ENCODE measurements at regions of chr1 and their contacts with region 1.

Region 1: DNA sequence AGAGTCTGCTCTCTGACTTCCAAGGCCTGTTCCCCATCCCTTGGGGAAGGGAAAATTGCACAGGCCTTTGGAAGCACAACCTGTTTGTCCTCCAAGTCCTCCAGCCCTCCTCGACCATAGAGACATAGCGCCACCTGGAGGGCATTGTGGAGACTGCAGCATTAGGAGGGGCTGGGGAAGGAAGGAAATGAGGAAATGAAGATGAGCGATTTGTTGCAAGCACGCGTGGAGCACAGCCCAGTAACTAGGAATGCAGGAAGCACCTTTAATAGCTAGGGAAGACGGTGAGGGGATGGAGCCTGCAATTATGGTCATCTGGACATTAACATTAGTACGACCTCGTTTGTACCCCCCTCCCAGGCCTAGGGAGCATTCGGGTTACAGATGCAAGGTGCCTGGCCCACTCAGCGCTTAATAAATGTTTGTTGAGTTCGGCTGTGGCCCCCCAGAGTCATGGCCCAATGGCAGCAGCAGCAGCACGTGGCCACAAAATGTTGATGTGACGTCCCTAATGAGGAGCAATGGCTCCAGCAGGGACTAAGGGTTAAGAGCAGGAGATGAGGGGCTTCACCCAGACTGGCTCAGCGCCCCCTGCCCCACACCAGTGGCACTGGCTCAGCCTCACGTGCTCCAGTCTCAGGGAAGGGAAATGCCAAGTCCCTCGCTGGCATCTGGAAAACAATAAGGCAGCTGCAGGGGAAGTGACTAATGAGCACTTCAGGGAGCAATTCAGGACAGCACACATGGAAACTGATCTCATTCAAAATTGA is 8.0 kb upstream of the CAMK2N1 start:
- DNase-seq: peak; percentile 85 to 88
- ATAC-seq: peak; percentile 80 to 90 (median 82)
- H3K4me3 ChIP-seq: no peak overlapping the region
- H3K27ac ChIP-seq: no peak overlapping the region
- H3K4me1 ChIP-seq: no peaks in the 10 kb centered on the region
- H3K27me3 ChIP-seq: peaks cover 0 to under 1% (median 0%) of the 10 kb centered on the region in 3 donors
- CTCF ChIP-seq: peak; percentile 98

Region 2: GRCh38 chr1:19918057-19918456 is 576.0 kb before region 1 on chr1:
- intact Hi-C with region 1: loop called (anchors 5 to 10 kb)
- DNase-seq: peak; percentile 76 to 86
- ATAC-seq: peak; percentile 58 to 90 (median 72)
- H3K4me3 ChIP-seq: no peak overlapping the region
- H3K27ac ChIP-seq: no peak overlapping the region
- H3K4me1 ChIP-seq: no peaks in the 10 kb centered on the region
- H3K27me3 ChIP-seq: peaks cover 0 to 4% (median 0%) of the 10 kb centered on the region in 3 donors
- CTCF ChIP-seq: peak; percentile 88

Region 3: GRCh38 chr1:19974822-19975416 is 519.1 kb before region 1 on chr1:
- intact Hi-C with region 1: loop called in 1 of 2 experiments (anchors 10 kb)
- DNase-seq: peak; percentile 42 to 60
- ATAC-seq: peak; percentile 57 to 82 (median 80)
- H3K4me3 ChIP-seq: no peak overlapping the region
- H3K27ac ChIP-seq: no peak overlapping the region
- H3K4me1 ChIP-seq: no peaks in the 10 kb centered on the region
- H3K27me3 ChIP-seq: peaks cover 0 to 30% (median 0%) of the 10 kb centered on the region in 3 donors
- CTCF ChIP-seq: peak; percentile 67

Region 4: DNA sequence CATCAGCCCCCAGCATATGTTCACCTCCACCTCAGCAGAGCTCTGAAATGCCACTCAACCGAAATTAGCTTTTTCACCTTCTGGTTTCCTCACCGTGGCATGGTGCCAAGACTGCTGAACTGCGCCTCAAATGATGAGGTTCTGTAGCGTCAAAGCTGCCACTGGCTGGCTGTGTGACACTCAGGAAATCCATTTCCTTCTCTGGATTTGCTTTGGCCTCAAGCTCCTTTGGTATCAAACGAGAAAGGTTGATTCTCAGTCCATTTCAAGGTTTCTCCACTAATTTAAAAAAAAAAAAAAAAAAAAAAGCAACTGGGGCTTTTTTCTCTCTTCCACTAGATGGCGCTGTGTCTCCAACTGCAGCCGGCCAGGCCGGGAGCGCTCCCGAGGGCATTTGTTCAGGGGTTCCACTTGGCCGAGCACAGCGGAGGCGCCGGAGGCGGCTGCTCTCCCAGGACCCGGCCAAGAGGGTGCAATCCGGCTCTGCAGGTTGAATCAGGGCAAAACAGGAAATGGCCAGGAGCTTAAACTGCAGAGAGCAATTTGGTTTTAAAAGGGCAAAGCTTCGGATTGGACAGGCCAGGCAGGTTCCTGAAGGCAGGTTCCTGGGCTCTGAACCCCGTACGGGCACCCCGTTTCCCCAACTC is 281.2 kb before region 1 on chr1:
- intact Hi-C with region 1: loop called (anchors 2 kb)
- DNase-seq: peak; percentile 55 to 81
- ATAC-seq: peak; percentile 54 to 89 (median 78)
- H3K4me3 ChIP-seq: peak overlapping the region; percentile 32
- H3K27ac ChIP-seq: no peak overlapping the region
- H3K4me1 ChIP-seq: peaks cover 4% of the 10 kb centered on the region
- H3K27me3 ChIP-seq: peaks cover 0 to 20% (median 0%) of the 10 kb centered on the region in 3 donors
- CTCF ChIP-seq: peak; percentile 73

Region 5: DNA sequence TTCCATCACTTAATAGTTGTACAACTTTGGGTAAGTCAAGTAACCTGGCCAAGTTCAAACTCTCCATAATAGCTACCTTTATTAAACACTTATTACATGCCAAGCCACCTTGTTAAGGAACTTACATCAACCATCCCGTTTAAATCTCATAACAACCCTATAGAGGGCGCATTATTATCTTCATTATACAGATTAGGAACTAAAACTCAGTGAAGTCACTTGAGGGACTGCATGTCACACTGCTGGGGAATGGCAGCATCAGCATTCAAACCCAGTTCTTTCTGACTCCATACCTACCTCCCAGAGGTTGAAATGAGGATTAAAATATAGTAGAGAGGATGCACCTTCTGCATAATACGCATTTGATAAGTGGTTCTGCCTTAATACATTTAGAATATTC is 260.6 kb before region 1 on chr1:
- intact Hi-C with region 1: loop called in 1 of 2 experiments (anchors 5 kb)
- DNase-seq: no peak
- ATAC-seq: no peak
- H3K4me3 ChIP-seq: no peak overlapping the region
- H3K27ac ChIP-seq: no peak overlapping the region
- H3K4me1 ChIP-seq: no peaks in the 10 kb centered on the region
- H3K27me3 ChIP-seq: peaks cover 0 to 19% (median 4%) of the 10 kb centered on the region in 3 donors
- CTCF ChIP-seq: peak; percentile 28

Region 6: GRCh38 chr1:20361806-20362640 is 132.0 kb before region 1 on chr1:
- intact Hi-C with region 1: loop called in 1 of 2 experiments (anchors 5 kb)
- DNase-seq: peak; percentile 65 to 82
- ATAC-seq: peak; percentile 44 to 66 (median 47)
- H3K4me3 ChIP-seq: no peak overlapping the region
- H3K27ac ChIP-seq: no peak overlapping the region
- H3K4me1 ChIP-seq: peaks cover 24% of the 10 kb centered on the region
- H3K27me3 ChIP-seq: peaks cover 0 to 22% (median 5%) of the 10 kb centered on the region in 3 donors
- CTCF ChIP-seq: peak; percentile 69

Region 7: DNA sequence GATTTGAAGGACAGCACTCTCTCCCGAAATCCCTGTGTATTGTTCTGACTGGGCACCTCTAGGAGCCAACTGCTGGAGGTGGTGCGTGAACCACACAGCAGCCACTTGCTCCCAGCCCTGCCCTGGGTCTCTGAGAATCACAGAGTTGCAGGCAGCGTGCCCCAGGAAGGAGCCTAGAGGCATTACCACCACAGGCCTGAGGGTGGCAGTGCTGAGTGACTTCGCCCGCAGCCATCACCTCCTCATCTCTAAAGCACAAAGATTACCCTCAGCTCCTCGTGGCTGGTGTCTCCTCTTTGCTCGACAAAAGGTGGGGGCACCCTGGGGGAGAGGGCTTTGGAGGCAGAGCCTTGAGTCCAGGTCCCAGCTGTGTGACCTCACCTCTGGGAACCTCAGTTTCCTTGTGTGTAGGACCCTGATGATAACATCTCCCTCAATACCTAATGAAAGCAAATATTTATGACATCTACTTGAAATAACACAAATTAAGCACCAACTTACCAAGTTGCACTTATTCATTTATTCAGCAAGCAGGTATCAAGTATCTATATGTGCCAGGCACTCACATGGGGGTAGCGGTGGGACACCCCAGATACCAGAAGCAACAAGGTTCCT is 117.0 kb before region 1 on chr1:
- intact Hi-C with region 1: loop called (anchors 5 to 10 kb)
- DNase-seq: peak in 1 of 2 donors; percentile 61
- ATAC-seq: peak; percentile 40 to 59 (median 50)
- H3K4me3 ChIP-seq: no peak overlapping the region
- H3K27ac ChIP-seq: no peak overlapping the region
- H3K4me1 ChIP-seq: no peaks in the 10 kb centered on the region
- H3K27me3 ChIP-seq: no peaks in the 10 kb centered on the region
- CTCF ChIP-seq: peak; percentile 65

Region 8: DNA sequence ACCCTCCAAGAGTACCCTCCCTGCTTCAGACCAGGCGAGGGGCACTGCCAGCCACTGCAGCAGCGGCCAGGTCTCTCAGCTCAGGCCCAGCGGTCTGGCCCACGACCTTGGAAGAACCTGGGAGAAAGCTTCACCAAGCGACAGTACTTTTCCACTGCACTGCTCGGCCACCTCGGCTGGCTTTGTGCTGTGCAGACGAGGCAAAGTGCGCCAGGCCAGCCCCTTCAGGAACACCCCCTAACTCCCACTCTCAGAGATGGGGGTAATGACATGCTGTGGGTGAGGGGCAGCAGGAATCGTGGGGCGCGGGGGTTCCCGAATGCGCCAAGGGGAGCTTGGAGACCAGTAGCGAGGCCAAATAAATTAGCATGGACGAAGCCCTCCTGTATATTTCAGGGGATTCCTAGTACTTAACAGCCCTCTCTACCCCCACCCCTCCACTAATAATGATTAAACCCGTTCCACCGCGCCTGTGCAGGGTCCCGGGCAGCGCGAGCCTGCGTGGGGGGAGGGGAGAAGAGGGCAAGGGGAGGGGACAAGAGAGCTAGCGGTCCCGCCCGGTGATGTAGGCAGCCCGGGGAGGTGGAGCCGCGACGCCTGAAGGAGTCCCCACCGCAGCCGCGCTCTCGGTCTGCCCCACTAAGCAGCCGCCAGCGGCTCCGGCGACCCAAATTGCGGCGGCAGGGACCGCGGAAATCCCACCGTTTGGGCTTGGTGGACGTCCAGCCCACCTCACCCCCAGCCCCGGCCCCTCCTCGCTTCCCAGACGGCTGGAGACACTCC is 58.1 kb after region 1 on chr1 and contains the start of gene FAM43B:
- intact Hi-C with region 1: no loop called
- DNase-seq: peak; percentile 82 to 83
- ATAC-seq: peak; percentile 60 to 88 (median 84)
- H3K4me3 ChIP-seq: peak within 1 kb of the TSS; percentile 52
- H3K27ac ChIP-seq: no peak within 1 kb of the TSS
- H3K4me1 ChIP-seq: peaks cover 7% of the 10 kb centered on the region
- H3K27me3 ChIP-seq: peaks cover 2 to 68% (median 7%) of the 10 kb centered on the region in 3 donors
- CTCF ChIP-seq: no peak
- total RNA-seq, gene FAM43B: 0.25 to 1.2 (median 0.56) TPM